ENCODE measurements at regions of chr1 and their contacts with region 1.

Region 1: GRCh38 chr1:87084244-87084836 is 169.9 kb downstream of the HS2ST1 start:
- DNase-seq: peak in 1 of 4 experiments; percentile 15
- ATAC-seq: peak; percentile 49; the same call in 1 of the 3 replicates
- H3K4me3 ChIP-seq: no peak overlapping the region
- H3K27ac ChIP-seq: no peak overlapping the region
- H3K4me1 ChIP-seq: no peaks in the 10 kb centered on the region
- H3K27me3 ChIP-seq: no peaks in the 10 kb centered on the region
- CTCF ChIP-seq: peak; percentile 22 to 60 (median 33); a peak in 4 of 6 replicates
- EP300 ChIP-seq: no peak
- POLR2A ChIP-seq: no peak
- RAD21 ChIP-seq: peak; percentile 66 to 71

Region 2: GRCh38 chr1:86704458-86704971 is 379.8 kb before region 1 on chr1 and contains the start of gene SH3GLB1:
- CTCF ChIA-PET with region 1: no interaction called
- POLR2A ChIA-PET with region 1: no interaction called
- in situ Hi-C with region 1: no loop called
- intact Hi-C with region 1: loop called (anchors 10 kb)
- DNase-seq: peak; percentile 83 to 94 (median 84)
- ATAC-seq: peak; percentile 93
- H3K4me3 ChIP-seq: peak within 1 kb of the TSS; percentile 84
- H3K27ac ChIP-seq: peak within 1 kb of the TSS; percentile 87
- H3K4me1 ChIP-seq: peaks cover 12 to 18% of the 10 kb centered on the region in 2 experiments
- H3K27me3 ChIP-seq: no peaks in the 10 kb centered on the region
- CTCF ChIP-seq: peak; percentile 88 to 90 (median 89)
- EP300 ChIP-seq: 0 out of 2 replicates have a peak, but pooled peaks have one; percentile 9
- POLR2A ChIP-seq: peak; percentile 85
- RAD21 ChIP-seq: peak; percentile 49 to 59; a peak in 3 of 4 replicates
- polyA plus RNA-seq, gene SH3GLB1: 10.2 to 10.4 TPM

Region 3: DNA sequence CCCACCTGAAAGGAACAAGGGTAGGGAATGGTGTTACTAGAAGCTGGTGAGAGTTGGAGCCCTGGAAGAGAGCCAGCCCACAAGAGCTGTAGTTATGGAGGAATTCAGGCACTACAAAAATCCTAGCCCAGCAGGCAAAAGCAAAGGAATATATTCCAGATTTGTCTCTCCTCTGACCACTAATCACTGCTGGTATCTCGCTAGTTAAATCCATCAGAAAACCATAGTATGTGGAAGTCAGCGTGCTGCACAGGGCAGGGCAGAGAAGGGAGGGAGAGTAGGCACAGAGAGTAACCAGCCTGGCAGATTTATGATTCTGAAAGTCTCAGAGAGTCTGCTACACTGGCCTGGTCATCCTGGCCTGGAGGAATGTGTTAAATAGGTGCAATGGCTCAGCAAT is 259.0 kb before region 1 on chr1:
- CTCF ChIA-PET with region 1: no interaction called
- POLR2A ChIA-PET with region 1: no interaction called
- in situ Hi-C with region 1: loop called (anchors 5 kb)
- intact Hi-C with region 1: no loop called
- DNase-seq: no peak
- ATAC-seq: no peak
- H3K4me3 ChIP-seq: no peak overlapping the region
- H3K27ac ChIP-seq: no peak overlapping the region
- H3K4me1 ChIP-seq: no peaks in the 10 kb centered on the region; a peak in 2 of 5 replicates
- H3K27me3 ChIP-seq: peaks cover 4 to 9% of the 10 kb centered on the region in 2 experiments; a peak in 3 of 5 replicates
- CTCF ChIP-seq: no peak
- EP300 ChIP-seq: no peak
- POLR2A ChIP-seq: no peak
- RAD21 ChIP-seq: no peak

Region 4: GRCh38 chr1:87826681-87827251 is 742.4 kb after region 1 on chr1:
- CTCF ChIA-PET with region 1: no interaction called
- POLR2A ChIA-PET with region 1: no interaction called
- in situ Hi-C with region 1: no loop called
- intact Hi-C with region 1: no loop called
- DNase-seq: peak; percentile 29 to 58 (median 50)
- ATAC-seq: peak; percentile 81
- H3K4me3 ChIP-seq: 0 out of 2 replicates have a peak overlapping the region, but pooled peaks have one; percentile 16
- H3K27ac ChIP-seq: peak overlapping the region; percentile 63; the same call in 2 of the 3 replicates
- H3K4me1 ChIP-seq: no peaks in the 10 kb centered on the region
- H3K27me3 ChIP-seq: no peaks in the 10 kb centered on the region
- CTCF ChIP-seq: no peak
- EP300 ChIP-seq: no peak
- POLR2A ChIP-seq: no peak
- RAD21 ChIP-seq: no peak